ENCODE measurements at regions of chr2 and their contacts with region 1.

Region 1: DNA sequence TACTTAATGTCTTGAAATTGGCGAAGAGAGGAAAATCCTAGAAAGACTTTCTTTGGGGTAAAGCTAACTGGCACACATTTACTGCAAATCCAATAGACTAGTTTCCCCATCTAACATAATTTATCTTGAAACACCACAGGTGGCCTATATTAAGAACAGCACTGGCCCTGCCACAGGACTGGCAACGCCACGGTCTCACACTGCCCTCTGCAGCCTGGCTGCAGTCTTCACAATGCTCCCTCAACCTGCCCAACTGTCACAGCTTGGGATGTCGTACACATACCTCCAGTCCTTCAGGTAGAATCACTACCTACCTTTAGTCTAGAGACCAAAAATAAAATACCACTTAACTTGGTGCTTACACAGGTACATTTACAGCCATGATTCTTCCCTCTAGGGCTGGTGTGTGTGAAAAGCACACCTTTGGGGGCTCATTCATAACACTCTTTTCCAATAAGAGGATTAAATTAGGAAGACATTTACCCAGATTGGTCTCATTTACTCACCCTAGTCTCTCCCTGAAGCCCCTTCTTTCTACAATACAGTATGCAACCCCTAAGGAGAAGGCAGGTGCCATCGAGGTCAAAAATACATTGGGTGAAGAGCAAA is 222.2 kb downstream of the C1D start:
- DNase-seq: no peak
- ATAC-seq: peak; percentile 97
- H3K4me3 ChIP-seq: no peak overlapping the region
- H3K27ac ChIP-seq: no peak overlapping the region
- H3K4me1 ChIP-seq: no peaks in the 10 kb centered on the region
- H3K27me3 ChIP-seq: no peaks in the 10 kb centered on the region
- CTCF ChIP-seq: peak; percentile 54 to 69 (median 58); a peak in 5 of 6 replicates
- EP300 ChIP-seq: no peak
- POLR2A ChIP-seq: no peak
- RAD21 ChIP-seq: peak; percentile 60

Region 2: DNA sequence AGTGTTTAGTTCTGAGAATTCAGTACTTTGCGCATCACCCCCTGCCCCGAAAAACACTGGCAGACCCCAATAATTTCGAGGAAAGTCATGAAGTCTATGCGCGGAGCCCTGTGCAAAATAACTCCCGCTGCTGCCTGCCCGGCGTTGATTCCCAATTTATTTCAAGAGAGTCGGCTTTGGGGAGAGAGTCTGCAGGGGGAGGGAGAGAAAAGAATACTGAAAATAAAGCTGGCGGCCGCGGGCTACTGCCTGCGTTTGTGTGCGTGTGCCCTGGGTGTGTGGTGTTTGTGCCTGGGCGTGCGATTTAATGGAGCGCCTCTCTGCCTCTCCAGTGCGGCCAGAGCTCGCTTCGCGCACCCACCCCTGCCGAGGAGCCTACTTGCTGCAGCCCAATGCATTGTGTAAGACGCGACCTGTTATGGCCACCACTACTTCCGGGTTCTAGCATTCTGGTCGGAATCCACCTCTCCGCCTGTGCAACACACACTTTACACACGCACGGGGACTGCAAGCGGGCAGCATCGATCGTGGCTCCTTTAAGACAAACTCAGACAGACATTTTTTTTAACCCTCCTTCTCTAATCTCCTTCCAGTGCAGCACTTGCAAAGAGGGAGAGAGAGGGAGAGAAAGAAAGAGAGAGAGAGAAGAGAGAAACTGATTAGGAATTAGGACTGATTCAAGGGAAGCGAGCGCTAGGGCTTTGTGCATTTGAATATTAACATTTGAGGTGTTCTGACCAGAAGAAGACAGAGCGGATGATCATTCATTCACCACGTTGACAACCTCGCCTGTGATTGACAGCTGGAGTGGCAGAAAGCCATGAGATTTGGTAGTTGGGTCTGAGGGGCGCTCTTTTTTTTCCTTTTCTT is 1405.7 kb before region 1 on chr2 and contains the start of gene MEIS1:
- CTCF ChIA-PET with region 1: no interaction called
- POLR2A ChIA-PET with region 1: no interaction called
- RAD21 ChIA-PET with region 1: no interaction called
- SMC1A ChIA-PET with region 1: no interaction called
- in situ Hi-C with region 1: loop called (anchors 25 kb)
- intact Hi-C with region 1: no loop called
- DNase-seq: no peak
- ATAC-seq: peak; percentile 95
- H3K4me3 ChIP-seq: peak within 1 kb of the TSS; percentile 57; the same call in 1 of the 2 replicates
- H3K27ac ChIP-seq: no peak within 1 kb of the TSS
- H3K4me1 ChIP-seq: no peaks in the 10 kb centered on the region
- H3K27me3 ChIP-seq: peaks cover 9 to 34% of the 10 kb centered on the region in 2 experiments
- CTCF ChIP-seq: no peak
- EP300 ChIP-seq: no peak
- POLR2A ChIP-seq: no peak
- RAD21 ChIP-seq: no peak
- polyA plus RNA-seq, gene MEIS1: 0.04 TPM in 1 of 2 experiments, not detected in the other

Region 3: DNA sequence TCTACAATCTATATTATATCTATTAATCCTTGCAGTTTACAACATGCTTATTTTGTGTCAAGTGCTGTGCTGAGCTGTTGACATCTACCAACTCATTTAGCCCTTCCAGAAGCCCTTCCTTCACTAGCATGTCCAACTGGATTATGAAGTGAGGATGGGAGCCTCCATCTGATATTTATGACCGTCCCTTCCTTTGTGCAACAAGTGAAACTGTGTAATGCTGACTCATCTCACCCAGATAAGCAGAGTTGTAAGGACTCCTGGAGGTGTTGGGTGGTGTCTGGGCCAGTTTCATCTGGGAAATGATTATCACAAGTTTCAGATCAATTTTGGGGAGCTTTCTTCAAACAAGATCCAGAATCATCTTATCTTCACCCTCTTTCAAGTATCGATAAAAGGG is 600.1 kb before region 1 on chr2:
- CTCF ChIA-PET with region 1: no interaction called
- POLR2A ChIA-PET with region 1: no interaction called
- RAD21 ChIA-PET with region 1: no interaction called
- SMC1A ChIA-PET with region 1: no interaction called
- in situ Hi-C with region 1: no loop called
- intact Hi-C with region 1: no loop called
- DNase-seq: no peak
- ATAC-seq: no peak
- H3K4me3 ChIP-seq: no peak overlapping the region
- H3K27ac ChIP-seq: no peak overlapping the region
- H3K4me1 ChIP-seq: no peaks in the 10 kb centered on the region
- H3K27me3 ChIP-seq: no peaks in the 10 kb centered on the region
- CTCF ChIP-seq: no peak
- EP300 ChIP-seq: no peak
- POLR2A ChIP-seq: no peak
- RAD21 ChIP-seq: no peak

Region 4: GRCh38 chr2:67733517-67733916 is 107.0 kb before region 1 on chr2:
- CTCF ChIA-PET with region 1: interaction called, 5 read pairs
- POLR2A ChIA-PET with region 1: no interaction called
- RAD21 ChIA-PET with region 1: no interaction called
- SMC1A ChIA-PET with region 1: no interaction called
- in situ Hi-C with region 1: no loop called
- intact Hi-C with region 1: loop called (anchors 5 kb)
- DNase-seq: no peak
- ATAC-seq: peak; percentile 83
- H3K4me3 ChIP-seq: no peak overlapping the region
- H3K27ac ChIP-seq: no peak overlapping the region
- H3K4me1 ChIP-seq: no peaks in the 10 kb centered on the region
- H3K27me3 ChIP-seq: 0 out of 4 replicates have a peak, but pooled peaks cover 0 to 1% of the 10 kb centered on the region in 2 experiments
- CTCF ChIP-seq: peak; percentile 17 to 61 (median 29); a peak in 5 of 6 replicates
- EP300 ChIP-seq: no peak
- POLR2A ChIP-seq: no peak
- RAD21 ChIP-seq: 0 out of 2 replicates have a peak, but pooled peaks have one; percentile 15

Region 5: GRCh38 chr2:68203587-68203986 is 363.0 kb after region 1 on chr2:
- CTCF ChIA-PET with region 1: no interaction called
- POLR2A ChIA-PET with region 1: no interaction called
- RAD21 ChIA-PET with region 1: no interaction called
- SMC1A ChIA-PET with region 1: no interaction called
- in situ Hi-C with region 1: no loop called
- intact Hi-C with region 1: no loop called
- DNase-seq: peak; percentile 84
- ATAC-seq: peak; percentile 96
- H3K4me3 ChIP-seq: peak overlapping the region; percentile 51; the same call in 1 of the 2 replicates
- H3K27ac ChIP-seq: peak overlapping the region; percentile 72
- H3K4me1 ChIP-seq: peaks cover 27% of the 10 kb centered on the region
- H3K27me3 ChIP-seq: no peaks in the 10 kb centered on the region
- CTCF ChIP-seq: no peak
- EP300 ChIP-seq: peak; percentile 73 to 74; a peak in 3 of 4 replicates
- POLR2A ChIP-seq: no peak
- RAD21 ChIP-seq: no peak